Aorta (tissue), 5 donors: ENCODE measurements at regions of chr4 and their contacts with region 1.

Region 1: GRCh38 chr4:140359562-140360427 is 13.7 kb upstream of the SCOC start:
- DNase-seq: peak; percentile 82 to 84
- ATAC-seq: peak; percentile 81
- H3K4me3 ChIP-seq: no peak overlapping the region
- H3K27ac ChIP-seq: no peak overlapping the region
- H3K4me1 ChIP-seq: no peaks in the 10 kb centered on the region
- H3K27me3 ChIP-seq: no peaks in the 10 kb centered on the region

Region 2: GRCh38 chr4:140609548-140610425 is 250.0 kb after region 1 on chr4:
- intact Hi-C with region 1: loop called (anchors 5 to 10 kb)
- DNase-seq: no peak
- ATAC-seq: peak; percentile 59
- H3K4me3 ChIP-seq: no peak overlapping the region
- H3K27ac ChIP-seq: no peak overlapping the region
- H3K4me1 ChIP-seq: no peaks in the 10 kb centered on the region
- H3K27me3 ChIP-seq: no peaks in the 10 kb centered on the region